GM13976 (cell line): ENCODE measurements at regions of chr4 and their contacts with region 1.

Region 1: DNA sequence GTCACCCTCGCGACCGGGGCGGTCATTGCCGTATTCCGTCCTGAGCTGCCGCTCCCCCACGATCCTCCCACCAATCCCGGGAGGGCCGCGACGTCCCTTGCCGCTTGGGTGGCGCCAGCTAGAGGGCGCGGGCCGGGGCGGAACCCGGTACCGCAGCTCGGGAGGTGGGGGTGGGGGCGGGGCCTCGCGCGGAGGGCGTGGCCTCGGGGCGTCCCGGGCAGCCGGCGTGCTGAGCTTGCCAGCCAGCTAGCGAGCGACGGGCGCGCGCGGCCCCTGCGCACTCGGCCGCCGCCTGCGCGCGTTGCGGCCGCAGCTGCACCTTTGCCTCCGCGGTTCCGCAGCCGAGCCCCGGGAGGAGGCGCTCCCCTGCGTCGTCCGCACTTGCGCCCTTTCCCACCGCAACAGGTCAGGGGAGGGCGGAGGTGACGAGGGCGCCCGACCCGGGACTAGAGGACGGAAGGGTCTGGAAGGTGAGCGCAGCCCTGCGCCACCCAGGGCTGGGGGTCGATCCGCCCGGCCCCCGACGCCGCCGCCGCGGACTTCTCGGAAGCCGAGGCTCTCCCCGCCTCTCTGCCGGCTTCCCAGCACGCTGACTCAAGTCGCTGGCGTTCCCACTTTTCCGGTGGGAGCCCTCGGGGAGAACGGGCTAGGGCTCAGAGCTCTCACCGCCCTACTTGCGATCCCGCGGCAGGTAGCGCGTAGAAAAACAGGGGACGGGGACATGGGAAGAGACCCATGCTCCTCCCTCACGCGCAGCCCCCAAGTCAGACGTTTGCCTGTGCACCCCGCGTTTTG is at the start of gene AFF1:
- DNase-seq: peak; percentile 95
- CTCF ChIP-seq: peak; percentile 45

Region 2: DNA sequence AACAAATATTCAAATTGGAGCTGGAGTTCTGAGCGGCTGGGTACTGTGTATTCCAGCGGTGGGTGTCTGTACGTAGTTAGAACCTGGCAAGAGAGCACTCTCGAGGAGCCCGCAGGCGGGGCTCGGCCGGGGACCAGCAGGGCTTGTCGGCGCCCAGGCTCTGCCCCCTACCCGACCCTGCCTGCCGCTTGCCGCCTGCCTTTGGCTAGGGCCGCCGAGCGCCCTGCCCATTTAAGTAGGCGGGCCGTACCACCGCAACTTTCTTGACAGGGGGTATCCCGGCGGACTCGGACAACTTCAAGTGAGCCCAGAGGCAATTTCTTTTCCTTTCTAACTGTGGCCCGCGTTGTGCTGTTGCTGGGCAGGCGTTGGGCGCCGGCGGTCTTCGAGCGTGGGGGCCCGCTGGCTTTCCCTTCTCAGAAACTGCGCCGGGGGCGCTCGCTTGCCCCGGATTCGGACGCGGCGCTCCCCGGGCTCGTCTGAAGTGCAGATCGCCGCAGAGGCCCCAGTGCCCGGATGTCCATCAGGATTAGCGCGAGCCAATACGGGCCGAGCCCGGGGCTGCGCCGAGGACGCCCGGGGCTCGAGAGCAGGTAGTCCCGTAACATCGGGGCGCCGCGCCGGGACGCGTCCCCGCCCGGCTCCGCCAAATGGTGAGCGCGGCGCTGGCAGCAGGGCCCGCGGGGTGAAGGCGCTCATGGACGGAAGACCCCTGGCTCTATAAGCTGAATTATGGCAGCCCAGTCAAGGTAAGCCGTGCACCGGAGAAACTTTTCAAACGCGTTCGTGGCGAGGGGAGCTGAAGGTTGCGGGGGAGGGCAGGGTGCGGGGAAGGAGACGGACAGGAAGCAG is 71.9 kb after region 1 on chr4:
- in situ Hi-C with region 1: loop called (anchors 5 kb)
- DNase-seq: peak; percentile 86
- CTCF ChIP-seq: no peak

Region 3: DNA sequence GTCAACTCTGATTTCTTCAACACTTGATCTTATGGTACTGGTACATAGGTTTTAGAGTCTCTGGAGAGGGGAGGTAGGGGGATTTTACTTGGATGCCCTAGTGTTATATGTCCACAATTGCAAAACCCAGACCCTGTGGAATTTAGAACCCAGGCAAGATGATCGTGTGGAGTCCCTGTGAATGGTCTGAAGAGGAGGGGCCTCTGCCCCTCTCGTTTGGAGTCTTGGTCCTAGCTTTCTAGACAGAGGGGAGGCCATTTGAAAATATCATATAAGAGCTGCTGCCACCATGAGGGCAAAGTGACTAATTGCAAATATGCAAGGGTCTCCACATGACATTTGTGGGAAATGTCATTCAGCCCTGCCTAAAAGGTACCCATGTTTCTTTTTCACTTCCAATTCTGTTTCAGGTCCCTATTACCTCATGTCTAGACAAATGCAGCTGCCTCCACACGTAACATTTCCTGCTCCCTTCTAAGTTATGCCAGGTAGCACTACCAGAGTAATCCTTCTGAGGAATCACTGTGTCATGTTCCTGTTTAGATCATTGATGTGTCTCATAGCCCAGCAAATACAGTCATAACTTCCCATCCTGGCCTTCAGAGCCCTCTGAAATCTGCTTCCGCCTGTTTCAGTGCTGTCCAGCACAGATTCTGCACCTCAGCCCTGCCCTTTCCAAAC is 158.6 kb after region 1 on chr4:
- in situ Hi-C with region 1: loop called (anchors 5 kb)
- DNase-seq: peak; percentile 65
- CTCF ChIP-seq: peak; percentile 51

Region 4: GRCh38 chr4:87425711-87426110 is 490.7 kb after region 1 on chr4:
- in situ Hi-C with region 1: loop called (anchors 25 kb)
- DNase-seq: no peak
- CTCF ChIP-seq: no peak

Region 5: DNA sequence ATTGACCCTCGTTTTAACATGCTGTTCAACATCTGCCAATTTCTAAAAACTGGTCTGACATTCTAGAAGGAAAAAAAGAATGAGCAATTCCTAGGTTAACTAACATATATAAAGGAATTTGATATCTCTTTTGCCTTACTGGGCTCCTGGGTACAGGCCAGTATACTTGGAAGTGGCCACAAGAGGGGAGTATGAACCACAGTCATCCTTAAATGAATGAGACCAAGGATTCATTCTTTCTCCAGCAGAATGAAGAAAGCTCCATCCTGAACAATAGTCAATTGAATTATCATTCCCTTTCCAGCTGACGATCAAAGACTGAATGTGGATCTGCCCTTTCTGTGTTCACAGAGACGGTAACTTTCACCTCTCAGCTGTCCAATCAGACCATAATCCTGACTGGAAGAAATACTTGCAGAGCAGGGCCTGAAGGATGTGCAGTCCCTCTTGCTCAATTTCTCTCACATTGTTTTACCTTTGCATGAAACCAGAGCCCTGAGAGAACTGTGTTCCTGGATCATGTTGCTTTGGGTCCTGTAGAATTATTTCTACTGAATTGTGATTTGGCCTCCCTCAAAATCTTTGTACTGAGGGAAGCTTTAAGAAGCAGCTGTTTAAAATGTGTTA is 609.0 kb after region 1 on chr4:
- in situ Hi-C with region 1: no loop called
- DNase-seq: no peak
- CTCF ChIP-seq: no peak